ENCODE measurements at regions of chr6 and their contacts with region 1.

Region 1: DNA sequence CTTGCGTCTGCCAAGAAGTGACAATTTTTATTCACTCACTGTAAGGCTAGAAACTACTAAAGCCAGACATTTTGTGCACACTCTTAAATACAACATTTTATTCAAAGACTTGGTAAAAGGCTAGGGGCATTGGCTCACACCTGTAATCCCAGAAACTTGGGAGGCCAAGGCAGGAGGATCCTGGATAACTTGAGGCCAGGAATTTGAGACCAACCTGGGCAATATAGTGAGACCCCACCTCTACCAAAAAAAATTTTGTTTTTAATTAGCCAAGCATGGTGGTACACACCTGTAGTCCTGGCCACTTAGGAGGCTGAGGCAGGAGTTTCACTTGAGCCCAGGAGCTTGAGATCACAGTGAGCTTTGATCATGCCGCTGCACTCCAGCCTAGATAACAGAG is 11.3 kb upstream of the SENP6 start:
- DNase-seq: no peak
- ATAC-seq: no peak
- H3K4me3 ChIP-seq: no peak overlapping the region
- H3K4me3 Mint-ChIP-seq: no peak overlapping the region
- H3K27ac ChIP-seq: no peak overlapping the region
- H3K27ac Mint-ChIP-seq: no peak overlapping the region
- H3K4me1 ChIP-seq: no peaks in the 10 kb centered on the region
- H3K4me1 Mint-ChIP-seq: no peaks in the 10 kb centered on the region
- H3K27me3 ChIP-seq: no peaks in the 10 kb centered on the region
- H3K27me3 Mint-ChIP-seq: no peaks in the 10 kb centered on the region
- CTCF ChIP-seq: no peak

Region 2: DNA sequence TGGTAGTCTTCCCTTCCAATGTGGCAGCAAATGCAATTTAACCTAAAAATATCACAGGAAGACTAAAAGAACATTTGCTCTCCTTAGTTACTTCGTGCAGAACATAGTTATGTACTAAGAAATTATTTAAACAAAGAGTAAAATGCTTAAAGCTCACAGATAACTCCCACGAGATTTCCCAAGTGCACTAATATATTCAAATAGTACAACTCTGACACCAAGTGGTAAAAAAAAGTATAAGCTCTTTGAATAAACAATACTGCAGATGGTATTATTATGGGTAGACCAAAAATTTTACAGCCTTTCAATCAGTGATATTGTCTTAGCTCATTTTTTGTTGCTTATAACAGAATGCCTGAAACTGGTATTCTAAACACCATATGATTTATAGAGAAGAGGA is 44.0 kb before region 1 on chr6:
- CTCF ChIA-PET with region 1: no interaction called
- POLR2A ChIA-PET with region 1: no interaction called
- intact Hi-C with region 1: no loop called
- DNase-seq: peak in 3 of 14 experiments; percentile 10 to 11 (median 11)
- ATAC-seq: no peak
- H3K4me3 ChIP-seq: no peak overlapping the region
- H3K4me3 Mint-ChIP-seq: no peak overlapping the region
- H3K27ac ChIP-seq: no peak overlapping the region
- H3K27ac Mint-ChIP-seq: no peak overlapping the region
- H3K4me1 ChIP-seq: no peaks in the 10 kb centered on the region
- H3K4me1 Mint-ChIP-seq: no peaks in the 10 kb centered on the region
- H3K27me3 ChIP-seq: peaks cover 0 to 2% of the 10 kb centered on the region in 2 experiments
- H3K27me3 Mint-ChIP-seq: peaks cover 13% of the 10 kb centered on the region
- CTCF ChIP-seq: no peak

Region 3: GRCh38 chr6:75643173-75643572 is 52.8 kb after region 1 on chr6:
- CTCF ChIA-PET with region 1: no interaction called
- POLR2A ChIA-PET with region 1: no interaction called
- intact Hi-C with region 1: loop called in 1 of 2 experiments (anchors 5 kb)
- DNase-seq: no peak
- ATAC-seq: no peak
- H3K4me3 ChIP-seq: no peak overlapping the region
- H3K4me3 Mint-ChIP-seq: no peak overlapping the region
- H3K27ac ChIP-seq: no peak overlapping the region
- H3K27ac Mint-ChIP-seq: no peak overlapping the region
- H3K4me1 ChIP-seq: no peaks in the 10 kb centered on the region
- H3K4me1 Mint-ChIP-seq: peaks cover 6% of the 10 kb centered on the region
- H3K27me3 ChIP-seq: no peaks in the 10 kb centered on the region
- H3K27me3 Mint-ChIP-seq: no peaks in the 10 kb centered on the region
- CTCF ChIP-seq: no peak

Region 4: GRCh38 chr6:77273929-77274328 is 1683.6 kb after region 1 on chr6:
- CTCF ChIA-PET with region 1: no interaction called
- POLR2A ChIA-PET with region 1: no interaction called
- intact Hi-C with region 1: no loop called
- DNase-seq: no peak
- ATAC-seq: no peak
- H3K4me3 ChIP-seq: no peak overlapping the region
- H3K4me3 Mint-ChIP-seq: no peak overlapping the region
- H3K27ac ChIP-seq: no peak overlapping the region
- H3K27ac Mint-ChIP-seq: no peak overlapping the region
- H3K4me1 ChIP-seq: no peaks in the 10 kb centered on the region
- H3K4me1 Mint-ChIP-seq: no peaks in the 10 kb centered on the region
- H3K27me3 ChIP-seq: no peaks in the 10 kb centered on the region
- H3K27me3 Mint-ChIP-seq: no peaks in the 10 kb centered on the region
- CTCF ChIP-seq: no peak

Measured in CD4-positive, alpha-beta T cell (primary cell).